ENCODE measurements at regions of chr22 and their contacts with region 1.

Region 1: GRCh38 chr22:22753526-22754267 is 109.3 kb downstream of the GGTLC2 start:
- H3K4me3 ChIP-seq: no peak overlapping the region
- H3K27ac ChIP-seq: no peak overlapping the region
- H3K4me1 ChIP-seq: no peaks in the 10 kb centered on the region
- CTCF ChIP-seq: peak; percentile 57; the same call in 1 of the 2 replicates

Region 2: GRCh38 chr22:22508274-22509176 is 245.2 kb before region 1 on chr22 and contains the start of gene ZNF280B:
- CTCF ChIA-PET with region 1: no interaction called
- POLR2A ChIA-PET with region 1: no interaction called
- H3K4me3 ChIP-seq: peak within 1 kb of the TSS; percentile 88
- H3K27ac ChIP-seq: peak within 1 kb of the TSS; percentile 0; the same call in 1 of the 2 replicates
- H3K4me1 ChIP-seq: no peaks in the 10 kb centered on the region
- CTCF ChIP-seq: peak; percentile 96

Region 3: DNA sequence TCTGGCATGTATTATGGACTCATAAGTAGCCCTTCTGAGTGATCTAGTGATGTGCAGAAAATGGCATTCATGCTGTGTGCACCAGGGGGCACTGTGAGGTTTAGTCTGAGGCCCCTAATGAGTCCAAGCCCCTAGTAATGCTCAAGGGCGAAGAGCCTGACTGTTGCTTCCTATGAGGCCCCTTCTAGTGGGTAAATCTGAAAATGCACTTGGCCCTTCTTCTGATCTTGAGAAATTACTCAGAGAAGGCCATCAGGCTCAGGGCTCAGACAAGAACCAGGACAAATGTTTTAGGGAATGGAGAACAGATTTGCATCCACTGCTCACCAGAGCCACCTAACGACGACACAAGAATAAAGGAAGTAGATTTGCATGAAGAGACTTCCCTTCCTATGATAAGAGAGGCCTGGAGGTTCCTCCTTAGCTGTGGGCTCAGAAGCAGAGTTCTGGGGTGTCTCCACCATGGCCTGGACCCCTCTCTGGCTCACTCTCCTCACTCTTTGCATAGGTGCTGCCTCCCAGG is 33.4 kb before region 1 on chr22:
- CTCF ChIA-PET with region 1: interaction called, 16 read pairs
- POLR2A ChIA-PET with region 1: no interaction called
- H3K4me3 ChIP-seq: no peak overlapping the region
- H3K27ac ChIP-seq: no peak overlapping the region
- H3K4me1 ChIP-seq: no peaks in the 10 kb centered on the region
- CTCF ChIP-seq: peak; percentile 10; the same call in 1 of the 2 replicates

Region 4: GRCh38 chr22:22737590-22737989 is 16.1 kb before region 1 on chr22:
- CTCF ChIA-PET with region 1: interaction called, 46 read pairs
- POLR2A ChIA-PET with region 1: no interaction called
- H3K4me3 ChIP-seq: no peak overlapping the region
- H3K27ac ChIP-seq: no peak overlapping the region
- H3K4me1 ChIP-seq: no peaks in the 10 kb centered on the region
- CTCF ChIP-seq: no peak

Region 5: DNA sequence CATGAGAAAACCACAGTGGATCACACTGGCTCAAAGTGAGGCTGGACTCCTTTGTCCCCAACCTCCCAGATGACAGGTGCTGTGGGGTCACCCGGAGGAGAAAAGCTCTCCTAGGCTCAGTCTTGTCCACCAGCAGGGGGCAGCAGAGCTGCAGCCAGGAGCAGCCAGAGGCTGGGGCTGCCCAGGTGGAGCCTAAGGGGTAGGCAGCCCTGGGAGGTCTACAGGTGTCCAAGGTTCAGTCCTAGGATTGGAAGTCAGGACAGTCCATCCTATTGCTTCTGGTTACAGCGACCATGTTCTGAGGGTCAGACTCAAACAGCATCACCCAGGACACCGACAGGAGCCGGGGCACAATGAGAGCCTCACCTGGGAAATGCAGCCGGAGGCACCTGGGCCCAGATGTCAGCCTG is 56.3 kb after region 1 on chr22:
- CTCF ChIA-PET with region 1: interaction called, 11 read pairs
- POLR2A ChIA-PET with region 1: no interaction called
- H3K4me3 ChIP-seq: no peak overlapping the region
- H3K27ac ChIP-seq: no peak overlapping the region
- H3K4me1 ChIP-seq: no peaks in the 10 kb centered on the region
- CTCF ChIP-seq: 0 out of 2 replicates have a peak, but pooled peaks have one; percentile 19

Region 6: GRCh38 chr22:22877523-22878210 is 124.0 kb after region 1 on chr22:
- CTCF ChIA-PET with region 1: interaction called, 60 read pairs
- POLR2A ChIA-PET with region 1: no interaction called
- H3K4me3 ChIP-seq: no peak overlapping the region
- H3K27ac ChIP-seq: no peak overlapping the region
- H3K4me1 ChIP-seq: no peaks in the 10 kb centered on the region
- CTCF ChIP-seq: peak; percentile 32; the same call in 1 of the 2 replicates

Region 7: DNA sequence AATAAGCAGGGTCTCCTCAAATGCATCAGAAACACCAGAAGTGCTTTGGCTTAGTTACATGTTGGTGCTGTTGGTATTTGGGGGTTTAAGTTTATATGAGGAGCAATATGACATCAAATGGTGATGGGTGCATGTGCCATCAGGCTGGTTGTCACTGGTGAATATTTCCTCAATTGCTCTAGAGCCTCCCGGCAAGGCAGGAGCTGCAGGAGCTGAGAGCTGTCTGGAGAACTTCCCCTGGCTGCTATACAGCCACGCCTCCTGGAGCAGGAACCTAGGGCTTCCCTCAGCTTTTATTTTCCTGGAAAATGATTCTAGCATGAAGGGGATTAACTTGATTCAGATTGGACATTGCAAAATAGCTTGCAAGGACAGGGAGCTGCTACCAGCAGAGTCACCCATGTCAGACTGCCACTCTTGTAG is 149.7 kb after region 1 on chr22:
- CTCF ChIA-PET with region 1: no interaction called
- POLR2A ChIA-PET with region 1: no interaction called
- H3K4me3 ChIP-seq: no peak overlapping the region
- H3K27ac ChIP-seq: no peak overlapping the region
- H3K4me1 ChIP-seq: no peaks in the 10 kb centered on the region
- CTCF ChIP-seq: no peak

Measured in HEK293 (cell line).